Heart left ventricle (tissue), 16 donors: ENCODE measurements at regions of chr1 and their contacts with region 1.

Region 1: DNA sequence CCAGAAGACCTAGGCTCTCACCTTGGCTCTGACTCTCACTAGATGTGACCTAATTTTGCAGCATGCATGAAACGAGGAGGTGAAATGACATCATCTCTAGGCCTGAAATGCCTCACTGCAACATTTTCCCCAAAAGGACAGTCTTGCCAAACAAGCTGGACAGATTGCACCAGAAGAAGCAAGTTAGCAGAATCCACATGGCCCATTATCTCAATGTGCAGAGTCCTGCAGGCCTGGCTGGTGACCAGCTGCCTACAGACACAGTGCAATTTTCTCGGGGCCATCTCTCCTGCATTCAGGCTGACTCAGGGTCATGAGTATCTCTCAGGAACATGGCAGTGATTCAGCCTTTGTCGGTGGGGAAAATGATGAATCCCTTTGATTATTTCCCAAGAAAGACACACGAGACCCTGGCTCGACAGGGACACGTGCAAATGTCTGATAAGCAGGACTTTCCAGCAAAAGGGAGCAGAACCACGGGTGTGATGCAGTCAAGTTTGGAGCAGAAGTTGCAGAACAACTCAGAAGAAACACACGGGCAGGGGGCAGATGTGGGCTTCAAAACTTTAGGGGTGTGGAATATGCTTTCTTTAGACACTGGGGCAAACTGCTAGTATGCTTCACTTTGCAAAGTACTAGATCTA is 38.7 kb downstream of the TRIM67 start:
- DNase-seq: no peak
- ATAC-seq: no peak
- H3K4me3 ChIP-seq: no peak overlapping the region
- H3K27ac ChIP-seq: no peak overlapping the region
- H3K4me1 ChIP-seq: no peaks in the 10 kb centered on the region
- H3K27me3 ChIP-seq: peaks cover 0 to 7% (median 0%) of the 10 kb centered on the region in 9 donors
- CTCF ChIP-seq: no peak
- POLR2A ChIP-seq: no peak

Region 2: DNA sequence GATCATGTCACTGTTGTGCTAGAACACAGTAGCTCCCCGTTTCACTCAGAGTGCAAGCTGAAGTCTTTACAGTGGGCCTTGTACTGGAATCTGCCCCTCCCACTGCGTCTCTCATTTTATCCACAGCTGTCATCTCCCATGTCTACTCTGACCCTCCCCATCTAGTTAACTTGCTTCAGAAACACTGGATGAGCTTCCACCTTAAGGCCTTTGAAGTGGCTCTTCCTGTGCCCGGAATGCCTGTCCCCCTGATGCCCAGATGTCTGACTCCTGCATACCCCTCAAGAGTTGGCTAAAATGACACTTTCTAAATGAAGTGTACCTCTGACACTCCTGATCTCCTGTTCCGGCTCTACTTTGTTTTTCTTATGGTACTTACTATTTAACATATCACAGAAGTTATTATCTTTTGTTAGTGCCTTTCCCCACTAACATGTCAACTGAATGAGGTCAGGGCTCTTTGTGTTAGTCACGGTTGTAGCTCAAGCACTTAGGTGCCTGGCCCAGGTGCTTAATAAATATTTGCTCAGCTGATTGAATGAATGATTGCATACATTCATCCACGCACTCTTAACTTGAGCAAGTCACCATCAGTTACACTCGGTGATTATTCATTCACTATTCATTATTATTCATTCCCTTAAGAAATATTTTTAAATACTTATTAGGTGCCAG is 208.3 kb before region 1 on chr1:
- intact Hi-C with region 1: loop called in 1 of 10 experiments (anchors 10 kb)
- DNase-seq: no peak
- ATAC-seq: no peak
- H3K4me3 ChIP-seq: no peak overlapping the region
- H3K27ac ChIP-seq: no peak overlapping the region
- H3K4me1 ChIP-seq: peaks cover 0 to 3% (median 0%) of the 10 kb centered on the region in 12 donors
- H3K27me3 ChIP-seq: no peaks in the 10 kb centered on the region
- CTCF ChIP-seq: no peak
- POLR2A ChIP-seq: no peak

Region 3: DNA sequence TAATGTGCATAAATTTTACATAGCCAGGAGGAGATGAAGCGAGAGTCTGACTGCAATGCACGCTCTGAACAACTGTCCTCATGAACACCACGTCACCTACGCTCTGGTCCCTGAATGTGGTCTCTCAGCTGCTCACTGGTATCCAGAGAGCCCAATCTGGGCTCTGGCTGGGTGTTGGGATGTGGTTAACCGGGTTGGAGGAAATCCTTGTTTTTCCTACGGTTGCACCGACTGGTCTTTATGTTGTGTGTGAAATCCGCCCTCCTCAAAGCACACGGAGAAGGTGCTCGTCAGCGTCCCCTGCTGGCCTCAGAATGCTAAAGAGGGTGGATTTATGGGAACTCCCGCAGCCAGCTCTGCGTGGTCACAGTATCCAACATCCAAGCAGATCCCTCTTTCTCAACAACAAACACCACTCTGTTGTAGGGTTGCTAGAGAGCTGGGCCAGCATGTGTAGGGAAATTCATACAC is 108.6 kb before region 1 on chr1:
- intact Hi-C with region 1: loop called in 1 of 10 experiments (anchors 10 kb)
- DNase-seq: no peak
- ATAC-seq: no peak
- H3K4me3 ChIP-seq: no peak overlapping the region
- H3K27ac ChIP-seq: no peak overlapping the region
- H3K4me1 ChIP-seq: peaks cover 0 to 12% (median 4%) of the 10 kb centered on the region in 12 donors
- H3K27me3 ChIP-seq: peaks cover 0 to 2% (median 0%) of the 10 kb centered on the region in 9 donors
- CTCF ChIP-seq: peak in 11 of 12 donors; percentile 9 to 53 (median 33)
- POLR2A ChIP-seq: no peak

Region 4: DNA sequence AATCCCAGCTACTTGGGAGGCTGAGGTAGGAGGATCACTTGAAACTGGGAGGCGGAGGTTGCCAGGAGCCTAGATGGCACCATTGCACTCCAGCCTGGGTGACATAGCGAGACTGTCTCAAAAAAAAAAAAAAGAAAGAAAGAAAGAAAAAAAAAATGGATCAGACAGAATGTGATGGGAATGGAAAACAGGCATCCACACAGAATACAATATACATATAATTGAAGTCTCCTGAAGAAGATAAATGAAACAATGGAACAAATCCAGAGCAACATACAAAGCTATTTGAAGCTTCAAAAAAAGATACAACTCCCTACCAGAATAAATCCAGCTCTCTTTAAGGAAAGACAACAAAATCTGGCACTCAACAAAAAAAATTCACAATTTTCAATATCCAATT is 232.5 kb after region 1 on chr1:
- intact Hi-C with region 1: no loop called
- DNase-seq: no peak
- ATAC-seq: no peak
- H3K4me3 ChIP-seq: no peak overlapping the region
- H3K27ac ChIP-seq: no peak overlapping the region
- H3K4me1 ChIP-seq: peaks cover 0 to 11% (median 0%) of the 10 kb centered on the region in 12 donors
- H3K27me3 ChIP-seq: no peaks in the 10 kb centered on the region
- CTCF ChIP-seq: no peak
- POLR2A ChIP-seq: no peak